PC-3 (cell line): ENCODE measurements at regions of chr5 and their contacts with region 1.

Region 1: GRCh38 chr5:26024774-26025173 is 1013.6 kb downstream of the CDH9 start:
- DNase-seq: peak; percentile 43
- ATAC-seq: peak; percentile 73
- H3K4me3 ChIP-seq: no peak overlapping the region
- H3K27ac ChIP-seq: no peak overlapping the region
- H3K4me1 ChIP-seq: no peaks in the 10 kb centered on the region
- H3K27me3 ChIP-seq: no peaks in the 10 kb centered on the region
- CTCF ChIP-seq: peak; percentile 45; the same call in 1 of the 2 replicates

Region 2: GRCh38 chr5:26343801-26344325 is 319.1 kb after region 1 on chr5:
- CTCF ChIA-PET with region 1: interaction called, 10 read pairs
- POLR2A ChIA-PET with region 1: no interaction called
- intact Hi-C with region 1: no loop called
- DNase-seq: no peak
- ATAC-seq: no peak
- H3K4me3 ChIP-seq: no peak overlapping the region
- H3K27ac ChIP-seq: no peak overlapping the region
- H3K4me1 ChIP-seq: no peaks in the 10 kb centered on the region
- H3K27me3 ChIP-seq: no peaks in the 10 kb centered on the region
- CTCF ChIP-seq: no peak

Region 3: DNA sequence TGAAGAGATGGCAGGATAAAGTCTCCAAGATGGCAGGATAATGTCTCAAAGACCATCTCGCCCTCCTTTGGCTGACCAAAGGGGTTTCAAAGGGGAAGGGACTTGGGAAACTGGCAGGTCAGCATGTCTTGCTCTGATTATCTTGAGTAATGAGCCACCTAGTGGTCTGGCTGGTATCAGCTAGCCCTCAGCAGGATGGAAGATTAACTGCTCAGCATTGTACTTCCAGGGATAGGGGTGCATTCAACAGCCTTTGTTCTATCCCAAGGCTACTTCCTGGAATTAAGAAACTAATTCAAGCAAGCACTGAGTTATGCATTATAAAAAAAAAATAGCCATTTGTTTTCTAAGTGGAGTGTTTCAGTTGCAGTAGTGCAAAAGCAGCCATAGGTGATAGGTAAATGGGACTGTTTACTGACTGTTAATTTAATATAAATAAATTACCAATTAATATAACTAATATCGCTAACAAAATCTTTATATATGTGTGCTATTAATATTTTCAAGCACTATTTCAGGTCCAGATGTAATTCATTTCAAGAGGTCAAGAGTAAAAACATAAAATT is 458.1 kb after region 1 on chr5:
- CTCF ChIA-PET with region 1: no interaction called
- POLR2A ChIA-PET with region 1: no interaction called
- intact Hi-C with region 1: loop called (anchors 5 kb)
- DNase-seq: peak; percentile 71
- ATAC-seq: peak; percentile 100
- H3K4me3 ChIP-seq: peak overlapping the region; percentile 67
- H3K27ac ChIP-seq: no peak overlapping the region
- H3K4me1 ChIP-seq: no peaks in the 10 kb centered on the region
- H3K27me3 ChIP-seq: no peaks in the 10 kb centered on the region
- CTCF ChIP-seq: peak; percentile 90

Region 4: DNA sequence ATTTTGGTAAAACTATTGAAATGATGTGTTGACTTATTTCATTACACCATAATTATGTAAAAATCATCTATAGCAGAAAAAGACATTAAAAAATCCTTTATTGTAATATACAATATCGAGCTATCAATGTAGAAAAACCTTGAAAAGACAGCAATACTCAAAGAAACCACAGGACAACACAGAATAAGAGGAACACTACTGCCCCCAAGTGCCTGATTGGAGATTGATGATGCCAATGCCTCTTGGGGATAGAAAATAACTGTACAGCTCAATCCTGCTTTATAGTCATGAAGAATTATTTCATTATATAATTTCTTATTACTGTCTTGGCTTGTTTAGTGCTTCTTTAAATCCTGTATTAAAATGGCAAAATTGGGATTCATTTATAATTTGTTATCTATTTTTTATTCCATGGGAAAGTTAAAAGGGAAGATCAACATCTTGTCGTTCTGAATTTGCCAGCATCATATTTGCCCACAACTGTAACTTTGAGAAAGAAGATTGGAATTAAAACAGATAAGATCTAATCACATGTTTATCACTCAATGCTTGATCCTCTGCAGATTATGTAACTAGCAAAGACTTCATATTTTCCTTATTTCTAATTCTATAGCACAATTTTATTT is 676.1 kb after region 1 on chr5:
- CTCF ChIA-PET with region 1: interaction called, 4 read pairs
- POLR2A ChIA-PET with region 1: no interaction called
- intact Hi-C with region 1: loop called (anchors 2 kb)
- DNase-seq: peak; percentile 75
- ATAC-seq: peak; percentile 82
- H3K4me3 ChIP-seq: no peak overlapping the region
- H3K27ac ChIP-seq: no peak overlapping the region
- H3K4me1 ChIP-seq: no peaks in the 10 kb centered on the region
- H3K27me3 ChIP-seq: no peaks in the 10 kb centered on the region
- CTCF ChIP-seq: peak; percentile 89